Calu3 (cell line): ENCODE measurements at regions of chr6 and their contacts with region 1.

Region 1: GRCh38 chr6:79949233-79949632 is 1.9 kb upstream of the ELOVL4 start:
- DNase-seq: peak; percentile 67
- H3K4me3 Mint-ChIP-seq: no peak overlapping the region
- H3K27ac Mint-ChIP-seq: no peak overlapping the region
- H3K4me1 Mint-ChIP-seq: peaks cover 18% of the 10 kb centered on the region
- H3K27me3 Mint-ChIP-seq: peaks cover 29% of the 10 kb centered on the region
- CTCF ChIP-seq: peak; percentile 73

Region 2: DNA sequence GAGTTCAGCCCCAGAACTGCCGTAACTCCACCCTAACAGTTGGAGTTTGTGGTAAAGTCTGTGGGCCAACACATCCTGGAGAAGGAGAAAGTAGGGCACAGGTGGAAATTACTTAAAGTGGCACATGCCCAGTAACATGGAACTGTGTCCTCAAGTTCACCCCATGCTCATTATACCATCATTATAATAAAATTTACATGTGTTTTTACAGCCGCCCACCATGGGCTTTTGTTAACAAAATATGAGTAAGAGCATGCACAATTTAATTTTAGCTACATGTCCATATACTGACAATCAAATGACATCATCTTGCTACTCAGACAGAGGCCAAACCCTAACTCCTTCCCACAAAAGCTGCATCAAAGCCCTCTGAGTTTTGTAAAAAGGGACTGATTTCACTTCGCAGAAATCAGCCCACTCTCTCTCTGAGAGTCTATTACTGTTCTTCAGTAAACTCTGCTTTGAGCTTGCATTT is 15.4 kb after region 1 on chr6:
- CTCF ChIA-PET with region 1: interaction called, 10 read pairs
- intact Hi-C with region 1: no loop called
- DNase-seq: no peak
- H3K4me3 Mint-ChIP-seq: no peak overlapping the region
- H3K27ac Mint-ChIP-seq: no peak overlapping the region
- H3K4me1 Mint-ChIP-seq: no peaks in the 10 kb centered on the region
- H3K27me3 Mint-ChIP-seq: no peaks in the 10 kb centered on the region
- CTCF ChIP-seq: no peak

Region 3: DNA sequence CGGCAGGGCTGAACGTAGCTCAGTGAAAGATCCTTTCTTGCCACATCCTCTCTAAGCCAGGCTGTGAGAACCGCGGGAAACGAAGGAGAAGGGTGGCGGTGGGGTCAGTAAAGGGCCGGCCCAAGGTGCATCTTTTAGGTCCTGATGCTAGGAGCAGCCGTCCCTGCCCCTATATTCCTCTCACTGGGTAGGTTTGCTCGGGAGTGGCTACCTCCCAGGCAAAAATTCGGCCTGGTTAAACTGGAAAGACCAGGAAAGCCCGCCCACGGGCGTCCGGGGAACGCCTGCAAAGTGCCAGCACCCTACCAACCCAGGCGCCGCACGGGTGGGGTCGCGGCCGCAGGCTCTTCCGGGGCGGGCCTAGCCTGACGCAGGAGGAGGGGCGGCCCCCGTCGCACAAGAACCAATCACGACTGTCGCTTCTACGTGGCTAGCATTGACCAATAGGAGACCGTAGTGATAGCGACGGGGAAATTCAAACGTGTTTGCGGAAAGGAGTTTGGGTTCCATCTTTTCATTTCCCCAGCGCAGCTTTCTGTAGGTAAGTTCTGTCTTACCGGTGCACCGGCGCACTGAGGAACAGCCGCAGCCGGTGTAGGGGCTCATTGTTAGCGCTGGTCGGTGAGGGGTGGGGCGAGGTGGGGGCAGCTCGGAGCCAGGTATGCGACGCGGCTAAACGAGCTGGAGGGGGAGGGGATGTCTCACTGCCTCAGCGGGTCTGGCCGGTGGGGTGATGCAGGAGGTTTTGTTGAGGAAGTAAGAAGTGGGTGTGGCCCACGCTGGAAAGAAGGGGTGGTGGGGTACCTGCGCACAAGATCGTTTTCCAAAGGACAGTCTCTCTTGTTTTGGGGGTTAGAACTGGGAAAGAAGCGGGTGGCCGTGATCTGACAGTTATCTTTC is 55.2 kb after region 1 on chr6 and contains the start of gene TTK:
- CTCF ChIA-PET with region 1: interaction called, 7 read pairs
- intact Hi-C with region 1: loop called (anchors 5 kb)
- DNase-seq: peak; percentile 93
- H3K4me3 Mint-ChIP-seq: peak within 1 kb of the TSS; percentile 80
- H3K27ac Mint-ChIP-seq: peak within 1 kb of the TSS; percentile 46
- H3K4me1 Mint-ChIP-seq: peaks cover 21% of the 10 kb centered on the region
- H3K27me3 Mint-ChIP-seq: no peaks in the 10 kb centered on the region
- CTCF ChIP-seq: no peak
- total RNA-seq, gene TTK: 29.6 and 36.2 TPM in 2 replicates

Region 4: GRCh38 chr6:80094017-80094416 is 144.8 kb after region 1 on chr6:
- CTCF ChIA-PET with region 1: no interaction called
- intact Hi-C with region 1: loop called (anchors 1 kb)
- DNase-seq: peak; percentile 4
- H3K4me3 Mint-ChIP-seq: no peak overlapping the region
- H3K27ac Mint-ChIP-seq: no peak overlapping the region
- H3K4me1 Mint-ChIP-seq: no peaks in the 10 kb centered on the region
- H3K27me3 Mint-ChIP-seq: no peaks in the 10 kb centered on the region
- CTCF ChIP-seq: peak; percentile 38

Region 5: DNA sequence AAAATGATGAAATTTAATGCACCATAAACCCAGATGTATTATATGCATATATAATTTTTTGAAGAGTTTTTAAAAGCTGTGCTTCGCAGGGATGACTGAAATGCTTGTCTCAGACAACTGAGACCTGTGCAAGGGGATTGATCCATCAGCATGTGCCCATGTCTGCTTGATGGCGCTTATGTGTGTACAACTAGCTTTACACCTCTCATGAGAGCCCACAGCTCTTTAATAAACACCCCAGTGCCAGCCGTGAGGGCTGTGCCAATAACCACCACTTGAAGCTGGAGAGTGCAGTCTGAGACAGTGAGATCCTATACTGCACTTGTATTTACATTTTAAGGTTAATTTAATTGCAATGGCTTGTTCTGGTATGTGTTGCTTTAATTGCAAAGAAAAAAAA is 382.7 kb after region 1 on chr6:
- CTCF ChIA-PET with region 1: no interaction called
- intact Hi-C with region 1: loop called (anchors 5 kb)
- DNase-seq: no peak
- H3K4me3 Mint-ChIP-seq: no peak overlapping the region
- H3K27ac Mint-ChIP-seq: no peak overlapping the region
- H3K4me1 Mint-ChIP-seq: no peaks in the 10 kb centered on the region
- H3K27me3 Mint-ChIP-seq: no peaks in the 10 kb centered on the region
- CTCF ChIP-seq: no peak